Activated CD4-positive, alpha-beta T cell treated with anti-CD3 and anti-CD28 coated beads for 36 hours (primary cell): ENCODE measurements at regions of chr2 and their contacts with region 1.

Region 1: DNA sequence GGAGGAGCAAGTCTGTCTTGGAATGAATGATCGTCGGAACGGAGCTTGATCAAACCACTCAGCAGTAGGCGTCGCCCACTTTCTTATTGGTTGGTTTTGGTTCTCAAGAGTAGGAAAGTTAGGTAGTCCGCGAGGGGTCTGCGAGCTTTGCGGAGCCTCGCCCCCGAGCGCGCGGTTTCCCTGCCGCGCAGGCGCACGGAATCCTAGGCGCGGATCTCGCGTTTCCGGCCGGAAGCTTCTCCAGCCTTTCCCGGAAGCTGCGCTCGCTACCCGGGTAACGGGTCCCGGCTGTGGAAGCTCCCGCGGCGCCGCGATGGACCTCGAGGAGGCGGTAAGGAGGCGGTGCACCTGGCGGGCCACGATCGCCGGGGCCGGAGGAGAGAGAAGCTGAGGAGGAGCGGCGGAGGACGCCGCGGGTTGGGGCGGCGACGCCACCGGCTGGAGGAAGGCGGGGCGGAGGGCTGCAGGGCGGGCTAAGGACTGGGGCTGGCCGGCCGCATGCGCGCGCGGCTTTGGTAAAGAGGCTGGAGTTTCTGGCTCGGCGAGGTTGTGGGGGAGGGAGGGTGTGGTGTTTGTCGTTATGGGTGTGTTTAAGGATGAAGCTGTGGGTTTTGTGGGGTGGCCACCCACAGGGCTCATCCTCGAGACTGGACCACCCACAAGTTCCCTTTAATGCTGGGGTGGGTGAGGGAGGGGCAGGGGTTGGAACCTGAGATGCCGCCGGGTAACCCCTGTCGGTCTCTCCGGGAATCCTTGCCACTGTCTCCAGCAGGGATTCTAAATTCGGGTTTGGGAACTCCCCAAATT is at the start of gene TAF1B:
- DNase-seq: peak; percentile 93
- ATAC-seq: peak; percentile 80
- H3K4me3 Mint-ChIP-seq: peak within 1 kb of the TSS; percentile 89
- H3K27ac Mint-ChIP-seq: peak within 1 kb of the TSS; percentile 85
- H3K4me1 Mint-ChIP-seq: peaks cover 37% of the 10 kb centered on the region
- H3K27me3 Mint-ChIP-seq: no peaks in the 10 kb centered on the region
- total RNA-seq, gene TAF1B: 28.7 to 28.8 TPM

Region 2: GRCh38 chr2:8956774-8957173 is 886.7 kb before region 1 on chr2:
- CTCF ChIA-PET with region 1: no interaction called
- POLR2A ChIA-PET with region 1: no interaction called
- intact Hi-C with region 1: no loop called
- DNase-seq: no peak
- ATAC-seq: no peak
- H3K4me3 Mint-ChIP-seq: no peak overlapping the region
- H3K27ac Mint-ChIP-seq: no peak overlapping the region
- H3K4me1 Mint-ChIP-seq: peaks cover 2% of the 10 kb centered on the region
- H3K27me3 Mint-ChIP-seq: peaks cover 11% of the 10 kb centered on the region

Region 3: GRCh38 chr2:9003616-9004337 is 839.7 kb before region 1 on chr2 and contains the start of gene MBOAT2:
- CTCF ChIA-PET with region 1: no interaction called
- POLR2A ChIA-PET with region 1: no interaction called
- intact Hi-C with region 1: loop called in 1 of 2 experiments (anchors 5 kb)
- DNase-seq: peak; percentile 89
- ATAC-seq: peak; percentile 96
- H3K4me3 Mint-ChIP-seq: peak within 1 kb of the TSS; percentile 75
- H3K27ac Mint-ChIP-seq: peak within 1 kb of the TSS; percentile 64
- H3K4me1 Mint-ChIP-seq: peaks cover 11% of the 10 kb centered on the region
- H3K27me3 Mint-ChIP-seq: peaks cover 6% of the 10 kb centered on the region
- total RNA-seq, gene MBOAT2: 4.7 to 6.9 TPM

Region 4: GRCh38 chr2:9782197-9782719 is 61.2 kb before region 1 on chr2:
- CTCF ChIA-PET with region 1: interaction called, 3 read pairs
- POLR2A ChIA-PET with region 1: interaction called, 7 read pairs
- intact Hi-C with region 1: loop called in 1 of 2 experiments (anchors 1 kb)
- DNase-seq: peak; percentile 89
- ATAC-seq: peak; percentile 80
- H3K4me3 Mint-ChIP-seq: peak overlapping the region; percentile 53
- H3K27ac Mint-ChIP-seq: peak overlapping the region; percentile 93
- H3K4me1 Mint-ChIP-seq: peaks cover 57% of the 10 kb centered on the region
- H3K27me3 Mint-ChIP-seq: no peaks in the 10 kb centered on the region

Region 5: GRCh38 chr2:9897331-9897737 is 53.9 kb after region 1 on chr2:
- CTCF ChIA-PET with region 1: no interaction called
- POLR2A ChIA-PET with region 1: interaction called, 4 read pairs
- intact Hi-C with region 1: loop called (anchors 2 to 5 kb)
- DNase-seq: peak; percentile 90
- ATAC-seq: peak; percentile 98
- H3K4me3 Mint-ChIP-seq: no peak overlapping the region
- H3K27ac Mint-ChIP-seq: no peak overlapping the region
- H3K4me1 Mint-ChIP-seq: peaks cover 27% of the 10 kb centered on the region
- H3K27me3 Mint-ChIP-seq: no peaks in the 10 kb centered on the region

Region 6: GRCh38 chr2:9951272-9951972 is 108.0 kb after region 1 on chr2 and contains the start of gene GRHL1:
- CTCF ChIA-PET with region 1: interaction called, 3 read pairs
- POLR2A ChIA-PET with region 1: no interaction called
- intact Hi-C with region 1: loop called (anchors 1 kb)
- DNase-seq: peak; percentile 95
- ATAC-seq: peak; percentile 98
- H3K4me3 Mint-ChIP-seq: peak within 1 kb of the TSS; percentile 68
- H3K27ac Mint-ChIP-seq: no peak within 1 kb of the TSS
- H3K4me1 Mint-ChIP-seq: peaks cover 4% of the 10 kb centered on the region
- H3K27me3 Mint-ChIP-seq: peaks cover 39% of the 10 kb centered on the region
- total RNA-seq, gene GRHL1: 0.27 to 0.53 TPM

Region 7: GRCh38 chr2:10302479-10303180 is 459.2 kb after region 1 on chr2 and contains the start of gene HPCAL1:
- CTCF ChIA-PET with region 1: no interaction called
- POLR2A ChIA-PET with region 1: no interaction called
- intact Hi-C with region 1: loop called in 1 of 2 experiments (anchors 5 kb)
- DNase-seq: peak; percentile 91
- ATAC-seq: peak; percentile 72
- H3K4me3 Mint-ChIP-seq: peak within 1 kb of the TSS; percentile 100
- H3K27ac Mint-ChIP-seq: peak within 1 kb of the TSS; percentile 89
- H3K4me1 Mint-ChIP-seq: peaks cover 65% of the 10 kb centered on the region
- H3K27me3 Mint-ChIP-seq: no peaks in the 10 kb centered on the region
- total RNA-seq, gene HPCAL1: 109 to 114 TPM